H1 (cell line): ENCODE measurements at regions of chr4 and their contacts with region 1.

Region 1: DNA sequence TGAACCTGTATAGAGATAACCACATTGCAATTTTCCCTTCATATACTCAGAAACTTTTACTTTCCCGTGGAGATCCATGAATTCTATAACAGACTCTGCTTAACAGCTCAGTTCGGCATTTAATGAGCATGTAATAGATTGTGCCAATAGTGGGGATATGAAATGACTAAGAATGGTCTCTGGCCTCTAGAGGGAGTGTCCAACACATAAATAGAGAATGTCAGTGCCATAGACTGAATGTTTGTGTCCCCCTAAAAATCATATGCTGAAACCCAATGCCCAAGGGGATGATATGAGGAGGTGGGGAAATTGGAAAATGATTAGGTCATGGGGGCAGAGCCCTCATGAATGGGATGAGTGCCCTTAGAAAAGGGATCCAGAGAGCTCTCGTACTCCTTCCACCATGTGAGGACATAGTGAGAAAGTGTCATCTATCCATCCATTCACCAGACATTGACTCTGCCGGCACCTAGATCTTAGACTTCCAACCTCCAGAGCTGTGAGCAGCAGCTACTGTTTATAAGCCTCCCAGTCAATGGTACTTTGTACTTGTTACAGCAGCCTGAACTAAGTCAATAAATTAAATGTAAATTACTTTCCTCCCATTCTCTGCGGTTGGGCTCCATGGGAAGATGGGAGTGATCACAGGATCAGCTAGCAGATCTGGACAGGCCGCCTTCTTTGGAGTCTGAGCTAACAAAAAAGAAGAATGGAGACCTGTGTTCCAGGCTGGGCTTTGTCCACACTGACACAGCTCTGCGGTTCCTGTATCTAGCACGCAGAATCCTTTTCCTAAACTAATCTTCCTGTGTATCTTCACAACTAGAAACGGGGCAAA is 28.1 kb upstream of the HPSE start:
- DNase-seq: no peak
- H3K4me3 ChIP-seq: no peak overlapping the region
- H3K27ac ChIP-seq: no peak overlapping the region
- H3K4me1 ChIP-seq: peaks cover 0 to 7% (median 1%) of the 10 kb centered on the region in 4 experiments; a peak in 3 of 7 replicates
- H3K27me3 ChIP-seq: no peaks in the 10 kb centered on the region; a peak in 2 of 7 replicates
- CTCF ChIP-seq: peak in 1 of 3 experiments; percentile 34; a peak in 1 of 4 replicates
- EP300 ChIP-seq: no peak
- POLR2A ChIP-seq: no peak
- RAD21 ChIP-seq: peak; percentile 49 to 51

Region 2: DNA sequence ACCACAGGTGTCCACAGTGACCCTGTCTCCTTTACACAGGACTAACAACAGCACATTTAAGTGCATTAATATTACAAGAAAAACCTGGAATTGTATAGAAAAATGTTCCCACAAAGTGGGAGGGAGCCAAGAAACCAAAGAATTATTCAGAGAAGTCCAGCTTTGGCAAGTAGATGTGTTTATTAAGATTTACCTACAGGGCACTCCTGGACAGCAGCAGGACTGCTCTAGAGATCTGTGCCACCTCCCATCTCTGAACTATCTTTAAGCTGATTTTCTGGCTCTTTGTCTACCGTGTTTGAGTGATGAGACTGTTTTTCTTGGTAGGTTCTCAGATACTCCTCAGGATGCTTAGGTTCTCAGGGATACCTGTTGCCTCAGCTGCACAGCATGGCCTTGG is 10.2 kb after region 1 on chr4:
- CTCF ChIA-PET with region 1: interaction called, 10 read pairs
- POLR2A ChIA-PET with region 1: interaction called, 4 read pairs
- DNase-seq: no peak
- H3K4me3 ChIP-seq: no peak overlapping the region
- H3K27ac ChIP-seq: no peak overlapping the region
- H3K4me1 ChIP-seq: no peaks in the 10 kb centered on the region
- H3K27me3 ChIP-seq: no peaks in the 10 kb centered on the region
- CTCF ChIP-seq: no peak
- EP300 ChIP-seq: no peak
- POLR2A ChIP-seq: no peak
- RAD21 ChIP-seq: no peak

Region 3: GRCh38 chr4:83387753-83388676 is 25.3 kb after region 1 on chr4:
- CTCF ChIA-PET with region 1: interaction called, 20 read pairs
- POLR2A ChIA-PET with region 1: no interaction called
- DNase-seq: no peak
- H3K4me3 ChIP-seq: no peak overlapping the region
- H3K27ac ChIP-seq: no peak overlapping the region
- H3K4me1 ChIP-seq: peaks cover 5 to 13% (median 9%) of the 10 kb centered on the region in 4 experiments; a peak in 6 of 7 replicates
- H3K27me3 ChIP-seq: peaks cover 21 to 48% (median 37%) of the 10 kb centered on the region in 4 experiments
- CTCF ChIP-seq: no peak
- EP300 ChIP-seq: no peak
- POLR2A ChIP-seq: no peak
- RAD21 ChIP-seq: peak in 1 of 2 experiments; percentile 44; a peak in 2 of 4 replicates